T-cell (primary cell): ENCODE measurements at regions of chr17 and their contacts with region 1.

Region 1: GRCh38 chr17:8091033-8091687 is 3.6 kb upstream of the ALOX12B start:
- DNase-seq: no peak
- ATAC-seq: no peak
- H3K4me3 ChIP-seq: no peak overlapping the region
- H3K4me3 Mint-ChIP-seq: no peak overlapping the region
- H3K27ac ChIP-seq: no peak overlapping the region
- H3K27ac Mint-ChIP-seq: no peak overlapping the region
- H3K4me1 ChIP-seq: peaks cover 0 to 13% of the 10 kb centered on the region in 2 experiments
- H3K4me1 Mint-ChIP-seq: peaks cover 12 to 21% (median 18%) of the 10 kb centered on the region in 3 donors
- H3K27me3 ChIP-seq: peaks cover 2 to 60% of the 10 kb centered on the region in 2 experiments
- H3K27me3 Mint-ChIP-seq: peaks cover 24 to 38% of the 10 kb centered on the region in 2 donors

Region 2: GRCh38 chr17:8001976-8002720 is 89.0 kb before region 1 on chr17 and contains the start of gene GUCY2D:
- CTCF ChIA-PET with region 1: no interaction called
- POLR2A ChIA-PET with region 1: no interaction called
- DNase-seq: peak in 1 of 35 experiments; percentile 29
- ATAC-seq: peak in 3 of 4 experiments; percentile 23 to 40 (median 34)
- H3K4me3 ChIP-seq: peak within 1 kb of the TSS in 1 of 2 donors; percentile 33
- H3K4me3 Mint-ChIP-seq: peak within 1 kb of the TSS; percentile 34 to 72 (median 48)
- H3K27ac ChIP-seq: no peak within 1 kb of the TSS
- H3K27ac Mint-ChIP-seq: no peak within 1 kb of the TSS
- H3K4me1 ChIP-seq: peaks cover 0 to 14% of the 10 kb centered on the region in 2 experiments
- H3K4me1 Mint-ChIP-seq: peaks cover 8 to 12% (median 9%) of the 10 kb centered on the region in 3 donors
- H3K27me3 ChIP-seq: peaks cover 3 to 65% of the 10 kb centered on the region in 2 experiments
- H3K27me3 Mint-ChIP-seq: peaks cover 37 to 51% of the 10 kb centered on the region in 2 donors
- total RNA-seq, gene GUCY2D: 0.06 TPM in 1 of 5 donors, not detected in the others

Region 3: GRCh38 chr17:8060274-8060673 is 30.9 kb before region 1 on chr17:
- CTCF ChIA-PET with region 1: interaction called in 1 of 2 experiments, 10 read pairs
- POLR2A ChIA-PET with region 1: no interaction called
- DNase-seq: peak in 27 of 35 experiments; percentile 16 to 85 (median 42)
- ATAC-seq: peak; percentile 48 to 67 (median 54)
- H3K4me3 ChIP-seq: no peak overlapping the region
- H3K4me3 Mint-ChIP-seq: no peak overlapping the region
- H3K27ac ChIP-seq: no peak overlapping the region
- H3K27ac Mint-ChIP-seq: no peak overlapping the region
- H3K4me1 ChIP-seq: peaks cover 0 to 13% of the 10 kb centered on the region in 2 experiments
- H3K4me1 Mint-ChIP-seq: peaks cover 0 to 22% (median 6%) of the 10 kb centered on the region in 3 donors
- H3K27me3 ChIP-seq: peaks cover 2 to 38% of the 10 kb centered on the region in 2 experiments
- H3K27me3 Mint-ChIP-seq: peaks cover 42 to 70% of the 10 kb centered on the region in 2 donors

Region 4: DNA sequence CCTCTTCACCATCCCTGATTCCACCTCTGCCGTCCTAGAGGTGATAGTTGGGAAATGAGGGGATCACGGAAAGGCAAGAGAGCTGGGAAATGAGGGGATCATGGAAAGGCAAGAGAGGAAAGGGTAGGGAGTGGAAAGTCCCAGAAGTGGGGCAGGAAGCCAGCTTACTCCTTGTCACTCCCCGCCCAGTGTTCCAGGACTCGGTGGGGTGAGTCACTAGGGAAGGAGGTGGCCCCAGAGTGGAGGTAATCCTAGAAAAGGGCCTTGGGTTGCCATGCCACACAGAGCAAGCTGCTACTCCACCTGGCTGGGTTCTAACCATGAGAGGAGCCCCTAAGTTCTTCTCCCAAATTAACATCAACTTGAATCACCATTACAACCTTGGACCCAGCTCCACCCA is 12.4 kb after region 1 on chr17:
- CTCF ChIA-PET with region 1: interaction called, 10 to 14 read pairs
- POLR2A ChIA-PET with region 1: no interaction called
- DNase-seq: no peak
- ATAC-seq: no peak
- H3K4me3 ChIP-seq: no peak overlapping the region
- H3K4me3 Mint-ChIP-seq: no peak overlapping the region
- H3K27ac ChIP-seq: no peak overlapping the region
- H3K27ac Mint-ChIP-seq: no peak overlapping the region
- H3K4me1 ChIP-seq: no peaks in the 10 kb centered on the region
- H3K4me1 Mint-ChIP-seq: no peaks in the 10 kb centered on the region
- H3K27me3 ChIP-seq: peaks cover 0 to 19% of the 10 kb centered on the region in 2 experiments
- H3K27me3 Mint-ChIP-seq: no peaks in the 10 kb centered on the region

Region 5: GRCh38 chr17:8109661-8110464 is 18.7 kb after region 1 on chr17:
- CTCF ChIA-PET with region 1: interaction called, 14 read pairs
- POLR2A ChIA-PET with region 1: no interaction called
- DNase-seq: peak; percentile 60 to 90 (median 77)
- ATAC-seq: peak; percentile 95 to 98 (median 98)
- H3K4me3 ChIP-seq: peak overlapping the region; percentile 46 to 59
- H3K4me3 Mint-ChIP-seq: peak overlapping the region; percentile 60 to 73 (median 68)
- H3K27ac ChIP-seq: no peak overlapping the region
- H3K27ac Mint-ChIP-seq: no peak overlapping the region
- H3K4me1 ChIP-seq: peaks cover 0 to 10% of the 10 kb centered on the region in 2 experiments
- H3K4me1 Mint-ChIP-seq: peaks cover 0 to 4% (median 4%) of the 10 kb centered on the region in 3 donors
- H3K27me3 ChIP-seq: peaks cover 0 to 63% of the 10 kb centered on the region in 2 experiments
- H3K27me3 Mint-ChIP-seq: peaks cover 14 to 29% of the 10 kb centered on the region in 2 donors

Region 6: GRCh38 chr17:8140060-8141029 is 49.2 kb after region 1 on chr17:
- CTCF ChIA-PET with region 1: no interaction called
- POLR2A ChIA-PET with region 1: no interaction called
- DNase-seq: peak in 5 of 35 experiments; percentile 4 to 32 (median 14)
- ATAC-seq: no peak
- H3K4me3 ChIP-seq: no peak overlapping the region
- H3K4me3 Mint-ChIP-seq: no peak overlapping the region
- H3K27ac ChIP-seq: peak overlapping the region; percentile 20
- H3K27ac Mint-ChIP-seq: peak overlapping the region in 1 of 2 donors; percentile 19
- H3K4me1 ChIP-seq: peaks cover 10 to 28% of the 10 kb centered on the region in 2 experiments
- H3K4me1 Mint-ChIP-seq: peaks cover 0 to 15% (median 2%) of the 10 kb centered on the region in 3 donors
- H3K27me3 ChIP-seq: no peaks in the 10 kb centered on the region
- H3K27me3 Mint-ChIP-seq: no peaks in the 10 kb centered on the region

Region 7: GRCh38 chr17:8369944-8370343 is 278.8 kb after region 1 on chr17:
- CTCF ChIA-PET with region 1: no interaction called
- POLR2A ChIA-PET with region 1: no interaction called
- DNase-seq: no peak
- ATAC-seq: no peak
- H3K4me3 ChIP-seq: no peak overlapping the region
- H3K4me3 Mint-ChIP-seq: no peak overlapping the region
- H3K27ac ChIP-seq: no peak overlapping the region
- H3K27ac Mint-ChIP-seq: no peak overlapping the region
- H3K4me1 ChIP-seq: no peaks in the 10 kb centered on the region
- H3K4me1 Mint-ChIP-seq: peaks cover 2 to 7% (median 6%) of the 10 kb centered on the region in 3 donors
- H3K27me3 ChIP-seq: no peaks in the 10 kb centered on the region
- H3K27me3 Mint-ChIP-seq: no peaks in the 10 kb centered on the region